ENCODE measurements at regions of chr4 and their contacts with region 1.

Region 1: DNA sequence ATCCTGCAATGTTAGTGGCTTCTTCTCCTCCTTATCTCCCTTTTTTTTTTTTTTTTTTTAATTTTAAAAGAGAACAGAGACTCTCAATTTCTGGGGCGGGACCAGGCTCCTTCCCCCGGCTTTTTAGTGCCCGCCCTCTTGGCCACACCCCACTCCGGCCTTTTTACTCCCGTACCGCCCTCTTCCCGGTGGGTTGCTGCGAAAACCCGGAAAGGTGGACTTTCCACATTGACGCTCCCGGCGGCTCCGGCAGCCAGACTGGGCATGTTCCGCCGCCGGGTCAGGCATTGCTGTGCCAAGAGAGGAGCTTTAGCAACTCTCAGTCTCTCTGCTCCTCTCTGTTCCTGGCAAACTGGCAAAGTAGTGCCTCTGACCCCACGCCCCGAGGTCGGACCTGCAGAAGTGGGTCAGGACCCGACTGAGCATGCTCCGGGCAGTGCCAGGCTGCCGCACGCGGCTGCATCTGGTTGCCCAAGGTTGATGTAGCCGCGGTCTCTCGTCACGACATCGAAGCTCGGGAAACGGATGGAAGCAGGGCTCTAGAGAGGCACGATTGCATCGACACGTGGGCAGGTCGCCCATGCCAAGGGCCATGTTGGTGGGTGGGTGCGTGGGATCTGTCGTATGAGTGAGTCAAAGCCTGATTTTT is 1.1 kb upstream of the MFAP3L start:
- DNase-seq: peak; percentile 96
- H3K4me3 ChIP-seq: peak overlapping the region; percentile 97
- H3K27ac ChIP-seq: peak overlapping the region; percentile 59
- H3K4me1 ChIP-seq: peaks cover 5% of the 10 kb centered on the region; the same call in 1 of the 2 replicates
- H3K27me3 ChIP-seq: no peaks in the 10 kb centered on the region

Region 2: DNA sequence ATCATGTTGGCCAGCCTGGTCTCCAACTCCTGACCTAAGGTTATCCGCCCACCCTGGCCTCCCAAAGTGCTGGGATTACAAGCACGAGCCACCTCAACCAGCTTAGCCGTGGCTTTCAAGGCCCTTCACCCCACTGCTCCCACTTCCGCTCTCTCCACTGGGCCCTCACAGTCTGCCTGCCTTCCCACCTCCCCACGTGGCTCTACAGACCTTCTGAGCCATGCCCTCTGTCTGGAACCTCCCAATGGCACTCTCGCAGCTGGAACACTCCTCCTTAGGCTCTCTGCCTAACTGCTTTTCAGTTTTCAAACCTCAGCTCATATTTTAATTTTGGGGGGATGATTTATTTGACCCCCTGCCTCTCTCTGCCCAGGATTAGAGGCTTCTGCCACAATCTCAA is 697.2 kb before region 1 on chr4:
- in situ Hi-C with region 1: no loop called
- DNase-seq: no peak
- H3K4me3 ChIP-seq: no peak overlapping the region
- H3K27ac ChIP-seq: no peak overlapping the region
- H3K4me1 ChIP-seq: peaks cover 5% of the 10 kb centered on the region
- H3K27me3 ChIP-seq: no peaks in the 10 kb centered on the region

Region 3: DNA sequence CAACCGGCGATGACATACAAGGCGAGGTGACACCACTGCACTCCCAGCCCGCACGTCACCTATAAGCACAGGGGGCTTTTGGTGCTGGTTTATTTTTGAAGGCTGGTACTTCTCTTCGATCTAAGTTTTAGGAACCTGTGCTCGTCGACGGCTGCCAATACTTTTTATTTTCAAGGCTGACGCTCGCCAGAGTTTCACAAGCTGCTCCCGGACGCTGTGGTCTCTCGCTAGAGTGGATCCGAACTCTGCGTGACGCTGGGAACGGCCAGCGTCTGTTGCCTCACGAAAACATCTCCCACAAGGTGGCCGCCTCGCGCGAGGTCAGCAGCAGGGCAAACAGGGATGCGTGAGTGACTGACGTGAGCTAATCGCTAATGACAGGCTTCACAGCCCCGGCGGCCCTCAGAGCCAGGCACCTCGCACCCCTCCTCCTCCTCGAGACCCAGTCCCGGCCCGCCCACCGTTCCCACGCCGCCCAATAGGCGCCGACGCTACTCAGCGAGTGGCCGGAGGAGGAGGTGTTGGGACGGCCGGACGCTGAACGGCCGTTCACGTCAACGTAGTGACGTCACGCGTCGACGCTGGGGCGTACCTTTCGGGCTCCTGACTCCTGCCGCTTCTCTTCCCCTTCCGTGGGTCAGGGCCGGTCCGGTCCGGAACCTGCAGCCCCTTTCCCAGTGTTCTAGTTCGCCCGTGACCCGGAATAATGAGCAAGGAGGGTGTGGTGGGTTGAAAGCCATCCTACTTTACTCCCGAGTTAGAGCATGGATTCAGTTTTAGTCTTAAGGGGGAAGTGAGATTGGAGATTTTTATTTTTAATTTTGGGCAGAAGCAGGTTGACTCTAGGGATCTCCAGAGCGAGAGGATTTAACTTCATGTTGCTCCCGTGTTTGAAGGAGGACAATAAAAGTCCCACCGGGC is 407.1 kb before region 1 on chr4 and contains the start of gene CLCN3:
- in situ Hi-C with region 1: loop called (anchors 25 kb)
- DNase-seq: peak; percentile 99
- H3K4me3 ChIP-seq: peak within 1 kb of the TSS; percentile 96
- H3K27ac ChIP-seq: peak within 1 kb of the TSS; percentile 95
- H3K4me1 ChIP-seq: peaks cover 20% of the 10 kb centered on the region
- H3K27me3 ChIP-seq: no peaks in the 10 kb centered on the region
- total RNA-seq, gene CLCN3: 16.4 and 20.4 TPM in 2 replicates

Measured in GM23248 (cell line).